ENCODE measurements at regions of chr19 and their contacts with region 1.

Region 1: GRCh38 chr19:1470203-1471009 is 8.6 kb downstream of the C19orf25 start:
- DNase-seq: peak; percentile 45 to 86 (median 60)
- ATAC-seq: peak; percentile 67 to 69
- H3K4me3 Mint-ChIP-seq: peak overlapping the region; percentile 64 to 86 (median 76)
- H3K27ac Mint-ChIP-seq: no peak overlapping the region
- H3K4me1 Mint-ChIP-seq: peaks cover 9 to 22% (median 17%) of the 10 kb centered on the region in 4 donors
- H3K27me3 Mint-ChIP-seq: peaks cover 0 to 11% (median 0%) of the 10 kb centered on the region in 5 donors

Region 2: DNA sequence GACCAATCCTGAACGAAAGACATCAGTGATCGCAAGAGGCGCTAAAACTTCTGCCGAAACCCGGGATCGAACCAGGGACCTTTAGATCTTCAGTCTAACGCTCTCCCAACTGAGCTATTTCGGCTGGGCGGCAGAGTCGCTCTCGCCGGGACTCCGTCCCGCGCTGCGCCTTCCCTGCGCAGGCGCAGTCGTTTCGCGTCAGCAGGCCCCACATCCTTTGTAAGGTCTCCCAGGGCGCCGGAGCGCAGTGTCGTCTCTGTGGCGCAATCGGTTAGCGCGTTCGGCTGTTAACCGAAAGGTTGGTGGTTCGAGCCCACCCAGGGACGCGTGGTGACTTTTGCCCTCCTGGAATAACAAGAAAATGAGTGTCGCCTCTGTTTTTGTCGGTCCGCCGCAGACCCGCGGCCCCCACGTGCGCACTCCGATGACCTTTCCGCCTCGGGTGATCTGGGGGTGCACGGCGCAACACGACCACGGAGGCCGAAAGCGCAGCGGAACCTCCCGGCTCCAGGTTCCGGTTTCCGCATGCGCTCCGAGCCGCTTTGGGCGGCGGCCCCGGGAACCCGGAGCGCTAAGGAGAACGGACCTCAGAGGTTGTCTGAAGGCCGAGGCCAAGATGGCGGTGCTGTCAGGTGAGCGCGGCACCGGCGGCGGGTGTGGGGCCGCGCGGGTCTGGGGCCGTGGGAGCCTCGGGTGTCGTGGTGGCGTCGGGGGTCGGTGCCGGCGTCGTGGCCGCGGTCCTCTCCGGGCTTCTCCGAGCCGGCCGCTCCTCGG is 86.9 kb before region 1 on chr19 and contains the start of gene NDUFS7:
- POLR2A ChIA-PET with region 1: no interaction called
- DNase-seq: peak; percentile 87 to 100 (median 94)
- ATAC-seq: peak; percentile 87 to 89
- H3K4me3 Mint-ChIP-seq: peak within 1 kb of the TSS; percentile 85 to 98 (median 94)
- H3K27ac Mint-ChIP-seq: peak within 1 kb of the TSS; percentile 94 to 100 (median 97)
- H3K4me1 Mint-ChIP-seq: peaks cover 19 to 32% (median 26%) of the 10 kb centered on the region in 4 donors
- H3K27me3 Mint-ChIP-seq: peaks cover 0 to 5% (median 2%) of the 10 kb centered on the region in 5 donors
- polyA plus RNA-seq, gene NDUFS7: 211 to 233 (median 215) TPM

Region 3: DNA sequence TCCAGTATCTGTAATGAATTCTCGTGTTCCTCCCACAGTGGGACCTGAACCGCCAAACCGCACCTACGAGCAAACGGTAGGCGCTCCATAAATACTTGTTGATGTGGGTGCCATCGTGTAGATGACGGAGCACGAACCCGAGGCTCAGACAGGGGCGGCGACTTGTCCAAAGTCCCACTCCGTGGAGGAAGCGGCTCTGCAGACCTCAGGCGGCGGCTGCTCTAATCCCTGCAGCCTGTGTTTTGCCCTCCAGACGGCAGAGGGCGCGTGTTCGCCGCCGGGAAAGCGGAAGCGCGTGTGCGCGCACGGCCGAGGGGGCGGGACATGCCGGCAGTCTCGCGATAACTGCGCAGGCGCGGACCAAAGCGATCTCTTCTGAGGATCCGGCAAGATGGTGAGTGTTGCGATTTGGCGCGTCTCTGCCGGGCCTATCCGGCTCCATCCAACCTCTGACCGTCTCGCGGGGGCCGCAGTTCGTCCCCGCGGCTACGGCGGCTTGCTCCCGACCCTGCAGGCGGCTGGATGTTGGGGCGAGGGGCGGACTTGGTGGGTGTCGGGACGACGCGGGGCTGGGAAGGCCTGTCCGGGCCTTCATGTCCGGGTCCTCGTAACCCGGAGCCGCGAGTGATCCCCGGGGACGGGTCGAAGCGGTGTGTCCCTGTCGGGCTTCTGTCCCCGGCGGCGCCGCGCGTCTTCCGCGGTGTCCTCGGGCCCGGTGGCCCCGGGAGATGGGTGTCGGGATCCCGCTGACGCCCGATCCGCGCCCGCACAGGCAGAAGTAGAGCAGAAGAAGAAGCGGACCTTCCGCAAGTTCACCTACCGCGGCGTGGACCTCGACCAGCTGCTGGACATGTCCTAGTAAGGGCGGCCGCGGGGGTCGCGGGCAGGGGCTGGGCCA is 32.1 kb before region 1 on chr19 and contains the start of gene RPS15:
- POLR2A ChIA-PET with region 1: interaction called, 14 read pairs
- DNase-seq: peak; percentile 90 to 98 (median 97)
- ATAC-seq: peak; percentile 82
- H3K4me3 Mint-ChIP-seq: peak within 1 kb of the TSS; percentile 94 to 99 (median 98)
- H3K27ac Mint-ChIP-seq: peak within 1 kb of the TSS; percentile 92 to 99 (median 99)
- H3K4me1 Mint-ChIP-seq: peaks cover 6 to 36% (median 25%) of the 10 kb centered on the region in 4 donors
- H3K27me3 Mint-ChIP-seq: peaks cover 0 to 2% (median 0%) of the 10 kb centered on the region in 5 donors
- polyA plus RNA-seq, gene RPS15: 3,438 to 4,304 (median 3,489) TPM

Region 4: DNA sequence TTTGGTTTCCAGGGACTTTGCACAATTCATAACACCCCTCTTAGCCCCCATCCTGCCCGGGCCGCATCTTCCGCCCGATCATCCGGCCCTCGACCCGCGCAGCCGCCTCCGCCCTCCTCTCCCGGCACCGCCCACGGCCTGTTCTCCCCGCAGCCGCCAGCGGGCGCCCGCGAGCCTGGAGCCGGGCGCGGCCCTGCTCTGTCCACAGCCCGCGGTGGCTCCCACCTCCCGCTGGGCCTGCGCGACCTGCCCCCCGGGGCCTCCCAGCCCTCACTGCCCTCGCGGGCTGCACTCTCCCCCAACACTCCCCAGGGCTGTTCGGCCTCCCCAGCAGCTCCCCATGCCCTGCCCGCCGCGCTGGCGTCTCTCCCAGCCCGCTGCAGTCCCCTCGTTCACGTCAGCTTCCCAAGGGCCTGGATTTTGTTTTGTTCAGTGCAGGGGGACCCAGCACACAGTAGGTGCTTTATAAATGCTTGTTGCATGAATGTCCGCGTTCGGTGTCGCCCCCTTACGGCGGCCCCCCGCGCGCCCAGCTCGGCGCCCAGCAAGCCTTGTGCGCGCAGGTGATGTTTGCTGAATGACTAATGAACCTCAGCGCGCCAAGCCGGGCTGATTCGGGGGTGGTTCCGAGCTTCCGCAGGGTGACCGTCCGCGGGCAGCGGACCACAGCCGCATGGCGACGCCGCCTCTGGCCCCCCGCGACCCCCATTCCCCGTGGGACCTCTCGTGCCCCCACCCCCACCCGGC is 25.0 kb before region 1 on chr19:
- POLR2A ChIA-PET with region 1: interaction called, 11 read pairs
- DNase-seq: peak; percentile 54 to 83 (median 76)
- ATAC-seq: peak; percentile 83 to 85
- H3K4me3 Mint-ChIP-seq: peak overlapping the region; percentile 65 to 82 (median 75)
- H3K27ac Mint-ChIP-seq: peak overlapping the region in 4 of 10 donors; percentile 6 to 53 (median 48)
- H3K4me1 Mint-ChIP-seq: peaks cover 9 to 36% (median 25%) of the 10 kb centered on the region in 4 donors
- H3K27me3 Mint-ChIP-seq: peaks cover 14 to 29% (median 21%) of the 10 kb centered on the region in 5 donors

Region 5: DNA sequence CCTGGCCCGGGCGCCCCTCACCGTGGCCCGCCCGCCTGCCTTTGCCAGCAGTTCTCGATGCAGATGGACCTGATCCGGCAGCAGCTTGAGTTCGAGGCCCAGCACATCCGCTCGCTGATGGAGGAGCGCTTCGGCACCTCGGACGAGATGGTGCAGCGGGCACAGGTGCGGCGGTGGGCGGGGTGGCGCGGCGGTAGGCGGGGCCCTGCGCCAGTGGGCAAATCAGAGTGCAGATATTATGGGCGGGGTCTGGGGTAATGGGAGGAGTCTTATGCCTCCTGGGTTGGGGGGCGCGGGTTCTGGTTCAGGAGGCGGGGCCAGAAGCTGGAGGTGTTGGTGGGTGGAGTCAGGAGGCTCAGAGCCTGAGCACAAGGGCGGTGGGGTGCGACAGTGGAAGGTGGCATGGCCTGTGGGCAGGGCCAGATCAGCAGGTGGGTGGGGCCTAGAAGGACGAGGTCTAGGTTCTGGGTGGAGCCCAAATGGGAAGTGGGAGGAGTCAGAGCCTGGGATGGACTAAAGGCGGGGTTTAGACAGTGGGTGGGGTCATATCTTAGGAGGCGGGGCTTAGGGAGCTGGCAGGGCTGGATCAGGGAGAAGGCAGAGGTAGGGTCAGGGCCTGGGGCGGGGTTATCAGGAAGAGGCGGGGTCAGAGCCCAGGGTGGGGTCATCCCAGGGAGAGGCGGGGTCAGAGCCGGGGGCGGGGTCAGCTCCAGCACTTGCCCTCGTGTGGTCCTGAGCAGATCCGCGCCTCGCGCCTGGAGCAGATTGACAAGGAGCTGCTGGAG is 14.9 kb before region 1 on chr19:
- POLR2A ChIA-PET with region 1: interaction called, 11 read pairs
- DNase-seq: peak in 8 of 10 donors; percentile 47 to 60 (median 52)
- ATAC-seq: peak; percentile 70 to 76
- H3K4me3 Mint-ChIP-seq: peak overlapping the region in 9 of 10 donors; percentile 28 to 79 (median 36)
- H3K27ac Mint-ChIP-seq: peak overlapping the region in 2 of 10 donors; percentile 25 to 52
- H3K4me1 Mint-ChIP-seq: peaks cover 7 to 24% (median 19%) of the 10 kb centered on the region in 4 donors
- H3K27me3 Mint-ChIP-seq: peaks cover 13 to 54% (median 26%) of the 10 kb centered on the region in 5 donors

Region 6: DNA sequence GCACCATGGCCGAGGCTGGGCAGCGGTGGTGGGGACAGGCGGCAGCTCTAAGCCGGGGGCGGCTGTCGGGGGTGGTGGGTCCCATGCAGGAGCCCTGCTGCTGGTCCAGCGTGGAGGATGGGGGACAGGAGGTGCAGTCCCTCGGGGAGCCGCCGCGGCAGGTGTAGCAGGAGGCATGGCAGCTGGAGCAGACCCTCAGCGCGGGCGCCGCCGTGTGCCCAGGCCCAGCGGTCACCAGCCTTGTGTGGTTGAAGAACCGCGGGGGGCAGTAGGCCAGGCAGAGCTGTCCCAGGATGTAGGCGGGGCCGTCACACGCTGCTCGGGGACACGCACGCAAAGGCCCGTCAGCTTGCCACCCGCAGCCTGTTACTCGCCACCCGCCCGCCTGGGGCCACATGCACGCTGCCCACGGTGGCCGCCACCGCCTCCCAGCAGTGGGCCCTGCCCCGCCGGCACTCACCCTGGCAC is 11.5 kb after region 1 on chr19:
- POLR2A ChIA-PET with region 1: no interaction called
- DNase-seq: peak in 1 of 10 donors; percentile 47
- ATAC-seq: no peak
- H3K4me3 Mint-ChIP-seq: no peak overlapping the region
- H3K27ac Mint-ChIP-seq: no peak overlapping the region
- H3K4me1 Mint-ChIP-seq: peaks cover 7 to 20% (median 12%) of the 10 kb centered on the region in 4 donors
- H3K27me3 Mint-ChIP-seq: no peaks in the 10 kb centered on the region

Region 7: GRCh38 chr19:1507763-1508509 is 37.5 kb after region 1 on chr19:
- POLR2A ChIA-PET with region 1: no interaction called
- DNase-seq: peak; percentile 86 to 97 (median 94)
- ATAC-seq: peak; percentile 90 to 95
- H3K4me3 Mint-ChIP-seq: peak overlapping the region; percentile 78 to 93 (median 88)
- H3K27ac Mint-ChIP-seq: peak overlapping the region; percentile 77 to 97 (median 95)
- H3K4me1 Mint-ChIP-seq: peaks cover 11 to 44% (median 23%) of the 10 kb centered on the region in 4 donors
- H3K27me3 Mint-ChIP-seq: peaks cover 0 to 20% (median 2%) of the 10 kb centered on the region in 5 donors

Region 8: DNA sequence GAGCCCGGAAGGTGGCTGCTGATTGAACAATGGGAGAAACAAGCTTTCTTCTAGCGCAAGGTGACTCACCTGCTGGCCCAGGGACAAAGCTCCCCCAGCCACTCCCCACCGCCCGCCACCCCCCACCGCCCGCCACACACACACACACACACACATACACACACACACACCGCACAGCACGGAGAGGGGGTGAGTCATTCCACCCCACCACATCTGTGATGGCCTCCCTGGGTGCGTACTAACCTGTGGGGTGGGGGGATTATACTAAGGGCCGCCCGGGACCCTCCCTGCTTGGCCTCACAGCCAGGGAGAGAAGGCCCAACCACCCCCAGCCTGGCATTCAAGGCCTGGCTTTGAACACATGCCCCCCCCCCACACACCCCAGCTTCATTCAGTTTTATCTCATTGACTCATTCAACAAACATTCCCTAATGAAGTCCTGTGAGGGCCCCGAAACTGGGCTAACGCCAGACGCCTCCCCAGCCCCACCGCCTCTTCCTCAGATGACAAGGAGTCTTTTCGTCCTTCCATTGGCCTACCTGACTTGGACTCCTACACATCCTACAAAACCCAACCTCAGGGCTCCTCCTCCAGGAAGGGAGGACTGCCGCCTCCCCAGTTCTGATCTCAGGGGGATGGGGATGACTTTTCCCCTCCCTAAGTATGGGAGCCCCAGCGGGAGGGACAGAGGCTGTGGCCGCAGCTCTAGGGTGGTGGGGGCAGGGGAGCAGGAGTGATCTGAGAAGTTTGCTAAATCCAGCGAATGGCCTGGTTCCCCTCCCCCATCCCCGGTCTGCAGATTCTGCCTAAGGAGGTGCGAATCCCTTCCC is 277.1 kb after region 1 on chr19:
- POLR2A ChIA-PET with region 1: no interaction called
- DNase-seq: peak in 4 of 10 donors; percentile 15 to 73 (median 34)
- ATAC-seq: peak; percentile 56 to 65
- H3K4me3 Mint-ChIP-seq: peak overlapping the region in 9 of 10 donors; percentile 29 to 74 (median 64)
- H3K27ac Mint-ChIP-seq: peak overlapping the region in 1 of 10 donors; percentile 37
- H3K4me1 Mint-ChIP-seq: peaks cover 8 to 23% (median 19%) of the 10 kb centered on the region in 4 donors
- H3K27me3 Mint-ChIP-seq: peaks cover 21 to 65% (median 27%) of the 10 kb centered on the region in 5 donors